IMR-90 (cell line): ENCODE measurements at regions of chr15 and their contacts with region 1.

Region 1: GRCh38 chr15:56245871-56246814 is 2.5 kb upstream of the RFX7 start:
- DNase-seq: peak; percentile 83
- ATAC-seq: peak; percentile 50
- H3K4me3 ChIP-seq: peak overlapping the region; percentile 21; the same call in 1 of the 2 replicates
- H3K27ac ChIP-seq: no peak overlapping the region
- H3K4me1 ChIP-seq: peaks cover 4% of the 10 kb centered on the region
- H3K27me3 ChIP-seq: no peaks in the 10 kb centered on the region
- CTCF ChIP-seq: peak; percentile 100; the same call in 1 of the 2 replicates
- POLR2A ChIP-seq: no peak
- RAD21 ChIP-seq: peak; percentile 78

Region 2: DNA sequence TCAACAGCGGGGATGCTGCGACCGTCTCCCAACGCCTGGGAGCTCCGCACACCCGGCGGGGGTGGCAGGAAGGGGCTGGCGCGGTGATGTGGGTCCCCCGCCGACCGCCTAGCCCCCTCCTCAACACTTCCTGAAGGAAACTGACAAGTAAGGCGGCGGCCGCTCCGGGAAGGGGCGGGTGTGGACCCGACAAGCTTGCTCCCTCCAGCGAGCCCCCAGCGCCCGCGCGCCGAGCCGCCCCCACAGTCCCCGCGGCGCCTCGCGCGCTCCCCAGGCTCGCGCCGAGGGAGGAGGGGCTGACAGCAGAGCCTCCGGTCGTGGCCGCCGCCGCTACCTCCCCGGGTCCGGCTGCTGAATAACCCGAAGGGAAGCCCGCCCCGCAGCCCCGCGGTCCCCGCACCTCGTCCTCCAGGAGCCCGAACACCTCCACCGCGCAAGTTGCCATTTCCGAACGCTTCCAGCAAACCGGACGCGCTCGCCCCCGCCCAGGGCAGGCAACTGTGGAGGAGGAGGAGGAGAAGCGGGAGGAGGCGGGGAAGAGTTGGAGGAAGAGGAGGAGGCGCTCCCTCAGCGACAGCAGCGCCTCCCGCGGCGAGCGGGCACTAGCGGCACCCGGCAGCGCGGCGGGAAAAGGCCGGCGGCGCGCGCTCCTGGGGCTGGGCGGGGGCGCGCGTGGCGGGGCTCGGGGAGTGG is 252.9 kb before region 1 on chr15 and contains the start of gene NEDD4:
- CTCF ChIA-PET with region 1: no interaction called
- POLR2A ChIA-PET with region 1: no interaction called
- dilution Hi-C with region 1: no loop called
- in situ Hi-C with region 1: no loop called
- intact Hi-C with region 1: loop called (anchors 2 kb)
- DNase-seq: peak; percentile 86
- ATAC-seq: peak; percentile 96
- H3K4me3 ChIP-seq: peak within 1 kb of the TSS; percentile 86
- H3K27ac ChIP-seq: peak within 1 kb of the TSS; percentile 96
- H3K4me1 ChIP-seq: peaks cover 4% of the 10 kb centered on the region
- H3K27me3 ChIP-seq: no peaks in the 10 kb centered on the region
- CTCF ChIP-seq: peak; percentile 61
- POLR2A ChIP-seq: no peak
- RAD21 ChIP-seq: no peak; the same call in 1 of the 2 replicates
- total RNA-seq, gene NEDD4: 80.7 and 106 TPM in 2 replicates

Region 3: DNA sequence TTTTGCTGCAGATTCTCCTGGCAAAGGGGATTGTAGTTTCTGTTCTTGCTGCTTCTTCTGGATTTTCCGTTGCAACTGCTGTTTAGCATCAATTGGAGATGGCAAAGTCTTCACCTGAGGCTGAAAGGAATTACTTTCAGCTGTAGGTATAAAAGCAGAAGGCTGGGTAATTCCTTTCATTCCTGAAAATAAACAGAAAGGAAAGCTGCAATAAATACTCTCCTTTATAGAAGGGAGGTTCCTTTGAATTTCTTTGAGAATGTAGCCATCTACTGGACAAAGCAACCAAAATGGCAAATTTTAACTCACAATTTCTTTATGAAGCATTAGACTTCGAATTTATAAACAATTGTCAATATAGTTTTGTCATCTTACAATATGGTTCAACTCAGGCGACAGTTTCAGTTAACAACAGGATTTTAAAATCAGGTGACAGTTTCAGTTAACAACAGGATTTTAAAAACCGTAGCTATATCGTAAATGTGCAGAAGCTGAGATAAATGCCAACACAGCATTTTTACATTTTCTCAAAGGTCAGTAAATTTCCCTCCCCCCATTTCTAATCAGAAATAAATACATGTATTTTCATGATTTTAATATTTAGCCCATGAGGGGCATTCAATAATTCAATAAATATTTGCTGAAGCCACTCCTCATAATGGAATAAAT is 147.8 kb before region 1 on chr15:
- CTCF ChIA-PET with region 1: no interaction called
- POLR2A ChIA-PET with region 1: no interaction called
- dilution Hi-C with region 1: no loop called
- in situ Hi-C with region 1: no loop called
- intact Hi-C with region 1: loop called (anchors 5 kb)
- DNase-seq: peak; percentile 21
- ATAC-seq: peak; percentile 14; the same call in 1 of the 2 replicates
- H3K4me3 ChIP-seq: no peak overlapping the region
- H3K27ac ChIP-seq: no peak overlapping the region
- H3K4me1 ChIP-seq: no peaks in the 10 kb centered on the region
- H3K27me3 ChIP-seq: no peaks in the 10 kb centered on the region
- CTCF ChIP-seq: peak; percentile 40
- POLR2A ChIP-seq: no peak
- RAD21 ChIP-seq: peak; percentile 41

Region 4: DNA sequence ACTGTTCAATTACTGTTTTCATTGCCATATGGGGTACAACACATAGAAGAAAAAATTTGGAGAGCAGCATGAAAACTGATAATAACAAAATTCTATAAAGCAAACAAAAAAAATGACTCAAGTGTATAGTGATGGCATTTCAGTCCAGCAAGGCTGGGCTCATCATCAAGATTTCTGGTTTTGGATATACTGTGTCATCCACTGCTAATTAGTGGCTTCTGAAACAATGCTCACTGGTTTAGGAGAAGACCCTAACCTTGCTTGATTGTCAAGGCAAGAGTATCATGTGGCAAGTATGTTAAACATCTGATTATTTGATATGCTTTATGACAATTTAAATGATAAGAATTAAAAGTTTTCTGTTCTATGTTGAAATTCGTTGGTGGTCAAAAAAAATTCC is 99.4 kb before region 1 on chr15:
- CTCF ChIA-PET with region 1: no interaction called
- POLR2A ChIA-PET with region 1: no interaction called
- dilution Hi-C with region 1: no loop called
- in situ Hi-C with region 1: no loop called
- intact Hi-C with region 1: loop called (anchors 5 kb)
- DNase-seq: peak; percentile 37
- ATAC-seq: peak; percentile 47
- H3K4me3 ChIP-seq: no peak overlapping the region
- H3K27ac ChIP-seq: no peak overlapping the region
- H3K4me1 ChIP-seq: 0 out of 2 replicates have a peak, but pooled peaks cover 3% of the 10 kb centered on the region
- H3K27me3 ChIP-seq: no peaks in the 10 kb centered on the region
- CTCF ChIP-seq: no peak
- POLR2A ChIP-seq: no peak
- RAD21 ChIP-seq: no peak

Region 5: DNA sequence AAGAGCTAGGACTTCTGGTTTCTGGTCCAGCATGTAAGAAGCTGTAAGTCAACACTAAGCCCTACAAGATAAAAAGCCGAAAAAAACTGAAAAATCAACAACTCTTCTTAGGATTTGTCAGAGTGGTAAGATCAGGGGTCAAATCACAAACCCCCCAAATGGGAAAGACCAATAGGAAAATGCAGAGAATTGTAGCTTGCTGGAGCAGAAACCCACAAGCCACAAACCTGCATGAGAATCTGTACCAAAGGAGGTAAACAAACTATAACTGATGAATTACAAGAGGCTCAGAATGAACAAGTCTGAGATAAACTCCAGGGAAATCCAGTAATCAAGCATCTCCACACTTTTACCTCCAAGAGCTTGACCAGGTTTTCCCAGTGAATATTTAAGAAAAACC is 38.4 kb before region 1 on chr15:
- CTCF ChIA-PET with region 1: interaction called, 3 read pairs
- POLR2A ChIA-PET with region 1: no interaction called
- dilution Hi-C with region 1: no loop called
- in situ Hi-C with region 1: no loop called
- intact Hi-C with region 1: loop called (anchors 2 kb)
- DNase-seq: no peak
- ATAC-seq: no peak
- H3K4me3 ChIP-seq: no peak overlapping the region
- H3K27ac ChIP-seq: no peak overlapping the region
- H3K4me1 ChIP-seq: peaks cover 9% of the 10 kb centered on the region
- H3K27me3 ChIP-seq: no peaks in the 10 kb centered on the region
- CTCF ChIP-seq: no peak
- POLR2A ChIP-seq: no peak
- RAD21 ChIP-seq: no peak

Region 6: GRCh38 chr15:56295433-56295832 is 49.3 kb after region 1 on chr15:
- CTCF ChIA-PET with region 1: no interaction called
- POLR2A ChIA-PET with region 1: no interaction called
- dilution Hi-C with region 1: no loop called
- in situ Hi-C with region 1: no loop called
- intact Hi-C with region 1: no loop called
- DNase-seq: no peak
- ATAC-seq: no peak
- H3K4me3 ChIP-seq: no peak overlapping the region
- H3K27ac ChIP-seq: no peak overlapping the region
- H3K4me1 ChIP-seq: no peaks in the 10 kb centered on the region
- H3K27me3 ChIP-seq: no peaks in the 10 kb centered on the region
- CTCF ChIP-seq: no peak
- POLR2A ChIP-seq: no peak
- RAD21 ChIP-seq: no peak

Region 7: GRCh38 chr15:56365075-56365711 is 119.0 kb after region 1 on chr15 and contains the start of gene TEX9:
- CTCF ChIA-PET with region 1: no interaction called
- POLR2A ChIA-PET with region 1: no interaction called
- dilution Hi-C with region 1: no loop called
- in situ Hi-C with region 1: no loop called
- intact Hi-C with region 1: loop called (anchors 1 kb)
- DNase-seq: peak; percentile 80
- ATAC-seq: peak; percentile 99
- H3K4me3 ChIP-seq: peak within 1 kb of the TSS; percentile 66
- H3K27ac ChIP-seq: peak within 1 kb of the TSS; percentile 25
- H3K4me1 ChIP-seq: no peaks in the 10 kb centered on the region
- H3K27me3 ChIP-seq: no peaks in the 10 kb centered on the region
- CTCF ChIP-seq: no peak
- POLR2A ChIP-seq: no peak
- RAD21 ChIP-seq: no peak
- total RNA-seq, gene TEX9: 1.4 and 2.5 TPM in 2 replicates